Psoas muscle (tissue), 8 donors: ENCODE measurements at regions of chr13 and their contacts with region 1.

Region 1: DNA sequence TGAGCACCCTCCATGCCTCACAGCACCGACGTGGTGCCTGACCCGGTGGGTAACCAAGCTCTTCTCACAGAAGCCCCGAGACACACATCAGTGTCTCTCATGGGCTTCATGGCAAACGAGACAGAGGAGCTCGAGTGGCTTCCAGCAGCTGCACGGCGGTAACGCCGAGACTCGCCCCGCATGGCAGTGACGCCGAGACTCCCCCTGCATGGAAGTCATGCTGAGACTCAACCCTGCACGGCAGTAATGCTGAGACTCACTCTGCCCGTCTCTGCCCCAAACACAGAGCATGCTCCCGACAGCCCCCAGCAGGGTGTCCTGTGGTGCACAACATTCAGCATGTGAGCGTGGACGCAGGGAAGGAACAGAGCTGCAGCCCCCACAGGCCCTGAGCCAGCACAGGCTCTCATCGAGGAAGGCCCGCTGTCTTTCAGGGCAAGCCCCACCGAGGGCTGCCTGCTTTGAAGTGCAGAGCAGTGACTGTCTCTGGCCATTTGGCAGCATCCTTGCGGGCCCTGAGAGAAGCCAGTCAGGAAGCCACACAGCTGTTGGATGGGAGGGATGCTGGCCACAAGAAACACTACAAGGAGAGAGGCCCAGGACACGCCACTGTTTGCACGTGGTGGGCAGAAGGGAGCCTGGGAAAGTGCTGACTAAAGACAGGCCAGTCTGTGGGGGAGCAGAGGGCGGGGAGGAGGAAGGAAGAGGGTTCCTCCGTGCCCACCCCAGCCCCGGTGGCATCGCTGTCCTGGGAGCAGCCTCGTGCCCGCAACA is 9.5 kb downstream of the GAS6 start:
- DNase-seq: peak in 1 of 2 donors; percentile 68
- ATAC-seq: peak; percentile 11 to 29 (median 18)
- H3K4me3 ChIP-seq: peak overlapping the region; percentile 13
- H3K27ac ChIP-seq: peak overlapping the region; percentile 82
- H3K4me1 ChIP-seq: peaks cover 67% of the 10 kb centered on the region
- H3K27me3 ChIP-seq: no peaks in the 10 kb centered on the region
- CTCF ChIP-seq: no peak

Region 2: GRCh38 chr13:113815151-113816058 is 39.0 kb before region 1 on chr13:
- intact Hi-C with region 1: no loop called
- DNase-seq: no peak
- ATAC-seq: no peak
- H3K4me3 ChIP-seq: peak overlapping the region; percentile 11
- H3K27ac ChIP-seq: no peak overlapping the region
- H3K4me1 ChIP-seq: peaks cover 29% of the 10 kb centered on the region
- H3K27me3 ChIP-seq: peaks cover 0 to 2% (median 0%) of the 10 kb centered on the region in 3 donors
- CTCF ChIP-seq: no peak

Region 3: DNA sequence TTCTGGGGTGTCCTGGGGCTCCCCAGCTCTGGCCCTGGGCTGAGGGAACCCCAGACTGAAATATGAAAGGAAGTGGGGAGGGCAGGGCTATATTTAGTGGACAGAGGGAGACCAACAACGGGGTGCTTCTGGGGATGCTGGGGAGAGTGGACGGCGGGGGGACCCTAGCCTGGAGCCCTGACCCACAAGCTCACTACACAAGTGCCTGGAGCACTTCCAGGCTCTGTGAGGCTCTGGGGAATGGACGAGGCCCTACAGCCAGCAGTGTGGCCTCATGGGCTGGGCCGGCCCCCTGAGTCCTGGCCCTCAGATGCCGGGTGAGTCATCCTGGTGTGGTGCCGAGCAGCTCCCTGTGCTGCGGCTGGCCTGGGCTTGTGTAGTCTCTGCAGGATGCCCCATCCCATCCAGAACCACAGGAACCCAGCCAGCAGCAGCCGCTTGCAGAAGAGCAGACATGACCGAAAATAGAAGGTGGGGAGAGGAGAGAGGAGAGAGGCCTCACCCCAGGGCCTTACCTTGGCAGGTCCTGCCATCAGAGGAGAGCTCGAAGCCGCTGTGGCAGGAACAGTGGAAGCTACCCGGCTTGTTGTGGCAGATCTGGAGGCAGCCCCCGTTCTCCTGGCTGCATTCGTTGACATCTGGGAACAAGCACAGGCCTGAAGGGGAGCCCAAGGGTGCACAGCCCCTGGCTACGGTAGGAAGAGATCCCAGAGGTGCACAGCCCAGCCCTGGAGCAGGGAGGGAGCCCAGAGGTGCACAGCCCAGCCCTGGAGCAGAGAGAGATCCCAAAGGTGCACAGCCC is 16.7 kb before region 1 on chr13:
- intact Hi-C with region 1: loop called in 1 of 2 experiments (anchors 2 kb)
- DNase-seq: peak; percentile 96 to 99
- ATAC-seq: peak; percentile 94 to 98 (median 96)
- H3K4me3 ChIP-seq: peak overlapping the region; percentile 33
- H3K27ac ChIP-seq: peak overlapping the region; percentile 88
- H3K4me1 ChIP-seq: peaks cover 36% of the 10 kb centered on the region
- H3K27me3 ChIP-seq: no peaks in the 10 kb centered on the region
- CTCF ChIP-seq: no peak

Region 4: GRCh38 chr13:113928685-113929627 is 74.5 kb after region 1 on chr13:
- intact Hi-C with region 1: loop called in 1 of 2 experiments (anchors 2 kb)
- DNase-seq: peak; percentile 92 to 98
- ATAC-seq: peak; percentile 83 to 86 (median 86)
- H3K4me3 ChIP-seq: peak overlapping the region; percentile 16
- H3K27ac ChIP-seq: peak overlapping the region; percentile 86
- H3K4me1 ChIP-seq: peaks cover 50% of the 10 kb centered on the region
- H3K27me3 ChIP-seq: no peaks in the 10 kb centered on the region
- CTCF ChIP-seq: no peak